ENCODE measurements at regions of chr18 and their contacts with region 1.

Region 1: GRCh38 chr18:3703732-3704176 is 253.8 kb downstream of the TGIF1 start:
- DNase-seq: peak in 4 of 5 donors; percentile 60 to 70 (median 64)
- ATAC-seq: peak; percentile 75 to 89 (median 85)
- H3K4me3 ChIP-seq: peak overlapping the region in 3 of 12 donors; percentile 7 to 37 (median 22)
- H3K27ac ChIP-seq: peak overlapping the region in 2 of 12 donors; percentile 32 to 54
- H3K4me1 ChIP-seq: peaks cover 0 to 24% (median 6%) of the 10 kb centered on the region in 12 donors
- H3K27me3 ChIP-seq: no peaks in the 10 kb centered on the region
- CTCF ChIP-seq: peak; percentile 41 to 76 (median 65)
- POLR2A ChIP-seq: no peak

Region 2: DNA sequence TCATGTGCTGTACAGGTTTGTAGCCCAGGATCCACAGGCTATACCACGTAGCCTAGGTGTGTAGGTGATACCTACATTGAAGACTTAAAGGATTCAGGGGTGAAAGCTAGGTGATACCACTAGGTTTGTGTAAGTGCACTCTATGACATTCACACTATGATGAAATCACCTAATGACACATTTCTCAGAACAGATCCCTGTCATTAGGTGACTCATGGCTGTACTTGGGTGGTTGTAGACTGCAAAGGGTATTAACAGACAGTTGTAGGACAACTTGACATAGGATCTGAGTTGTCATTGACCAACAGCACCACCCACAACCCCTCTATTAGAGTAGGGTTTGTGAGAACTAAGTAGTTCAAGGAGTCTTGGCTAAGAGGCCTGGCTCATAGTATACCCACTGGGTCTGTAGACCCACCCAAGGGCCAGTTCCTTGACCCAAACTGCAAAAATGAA is 1075.9 kb before region 1 on chr18:
- intact Hi-C with region 1: loop called in 1 of 10 experiments (anchors 10 kb)
- DNase-seq: no peak
- ATAC-seq: peak in 1 of 4 donors; percentile 48
- H3K4me3 ChIP-seq: no peak overlapping the region
- H3K27ac ChIP-seq: no peak overlapping the region
- H3K4me1 ChIP-seq: no peaks in the 10 kb centered on the region
- H3K27me3 ChIP-seq: no peaks in the 10 kb centered on the region
- CTCF ChIP-seq: no peak
- POLR2A ChIP-seq: no peak

Region 3: DNA sequence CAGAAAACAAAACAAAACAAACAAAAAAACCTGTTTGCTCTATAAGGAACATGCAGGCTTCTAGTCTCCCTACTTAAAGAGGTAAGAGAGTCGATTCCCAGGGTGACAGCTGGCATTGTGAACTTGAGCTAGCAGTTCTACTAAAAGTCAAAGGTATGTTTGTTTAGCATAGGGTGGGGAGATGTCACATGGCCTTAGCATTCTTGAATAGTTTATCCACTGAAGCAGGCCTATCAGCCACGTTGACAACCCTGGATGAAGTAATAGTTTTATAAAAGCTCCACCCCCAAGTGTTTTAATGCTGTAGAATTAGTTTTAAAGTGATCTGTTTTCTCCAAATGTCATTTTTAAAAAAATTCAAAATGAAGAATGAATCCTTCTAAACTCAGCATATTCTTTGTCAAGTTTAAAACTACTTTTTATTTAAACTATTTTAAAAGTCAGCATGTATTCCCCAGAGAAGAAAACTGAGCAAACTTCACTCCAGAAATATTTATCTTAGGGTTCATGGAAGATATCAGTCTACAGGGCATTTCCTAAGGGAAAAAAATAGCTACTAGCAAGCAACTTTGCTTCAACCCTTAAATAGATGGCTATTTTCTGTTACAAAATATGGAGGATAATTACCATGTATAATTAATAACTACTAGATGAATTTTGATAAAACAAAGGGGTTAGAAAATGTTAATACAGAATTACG is 485.7 kb before region 1 on chr18:
- intact Hi-C with region 1: no loop called
- DNase-seq: peak in 1 of 5 donors; percentile 37
- ATAC-seq: peak; percentile 41 to 55 (median 53)
- H3K4me3 ChIP-seq: peak overlapping the region; percentile 4 to 70 (median 60)
- H3K27ac ChIP-seq: peak overlapping the region; percentile 77 to 97 (median 90)
- H3K4me1 ChIP-seq: peaks cover 0 to 34% (median 9%) of the 10 kb centered on the region in 12 donors
- H3K27me3 ChIP-seq: no peaks in the 10 kb centered on the region
- CTCF ChIP-seq: no peak
- POLR2A ChIP-seq: peak; percentile 12 to 54

Region 4: DNA sequence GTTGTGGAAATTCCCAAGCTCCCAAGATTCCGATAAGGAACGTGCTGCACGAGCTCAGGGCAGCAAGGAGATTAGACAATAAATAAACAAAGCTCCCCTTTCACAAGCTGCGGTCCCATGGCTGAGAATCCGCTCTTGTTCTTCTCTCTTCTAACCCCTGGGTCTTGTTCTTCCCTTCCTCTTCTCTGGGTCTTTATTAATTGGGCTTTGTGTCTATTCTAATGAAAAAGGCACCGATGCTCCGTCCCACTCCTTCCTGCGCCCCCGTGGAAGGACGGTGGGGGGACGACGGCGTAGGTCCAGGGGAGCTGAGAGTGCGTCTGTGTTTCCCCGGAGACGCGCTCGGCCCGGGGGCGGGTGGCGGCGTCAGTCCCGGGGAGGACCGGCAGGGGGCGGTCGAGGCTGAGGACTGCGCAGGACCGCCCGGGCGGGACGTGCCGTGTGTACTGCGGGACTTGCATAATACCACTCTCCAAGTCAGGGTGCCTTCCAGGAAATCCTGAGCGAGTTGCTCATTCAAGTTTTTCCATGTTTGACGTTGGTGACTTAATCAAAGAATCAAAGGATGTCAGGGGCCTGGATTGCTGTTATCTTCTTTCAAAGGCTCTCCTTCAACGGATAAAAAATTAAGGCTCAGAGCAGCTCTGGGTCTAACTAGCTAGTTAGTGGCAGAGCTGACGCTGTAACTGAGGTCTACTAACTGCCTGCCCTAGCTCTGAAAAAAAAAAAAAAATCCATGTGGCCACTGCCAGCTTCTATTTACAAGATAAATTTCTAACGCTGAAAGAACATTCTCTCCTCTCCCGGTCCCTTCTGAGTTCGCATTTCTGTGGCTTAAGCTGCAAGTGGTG is 67.6 kb after region 1 on chr18:
- intact Hi-C with region 1: loop called in 3 of 10 experiments (anchors 1 to 10 kb)
- DNase-seq: peak; percentile 82 to 91 (median 84)
- ATAC-seq: peak; percentile 97 to 100 (median 100)
- H3K4me3 ChIP-seq: peak overlapping the region in 11 of 12 donors; percentile 1 to 53 (median 43)
- H3K27ac ChIP-seq: peak overlapping the region in 9 of 12 donors; percentile 18 to 70 (median 59)
- H3K4me1 ChIP-seq: peaks cover 0 to 9% (median 2%) of the 10 kb centered on the region in 12 donors
- H3K27me3 ChIP-seq: no peaks in the 10 kb centered on the region
- CTCF ChIP-seq: peak; percentile 93 to 99 (median 96)
- POLR2A ChIP-seq: no peak

Region 5: DNA sequence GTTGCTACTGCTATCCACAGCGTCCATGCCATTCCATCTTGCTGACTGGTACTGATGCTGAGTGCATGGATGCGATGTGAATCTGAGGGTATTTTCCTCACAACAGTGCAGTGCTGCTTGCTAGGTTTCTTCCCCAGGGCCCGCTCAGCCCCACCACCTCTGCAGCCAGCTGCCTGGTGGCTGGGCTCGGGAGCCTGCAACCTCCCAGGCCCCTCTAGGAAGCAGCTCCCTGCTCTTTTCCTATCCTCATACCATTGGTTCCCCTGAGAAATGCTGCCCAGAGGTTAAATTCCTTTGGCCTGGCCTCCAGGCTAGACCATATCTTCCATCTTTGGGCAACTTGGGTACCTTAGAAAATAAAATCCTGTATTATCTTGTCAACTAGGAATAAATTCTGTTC is 159.8 kb after region 1 on chr18:
- intact Hi-C with region 1: loop called in 2 of 10 experiments (anchors 5 to 10 kb)
- DNase-seq: no peak
- ATAC-seq: no peak
- H3K4me3 ChIP-seq: no peak overlapping the region
- H3K27ac ChIP-seq: no peak overlapping the region
- H3K4me1 ChIP-seq: peaks cover 0 to 17% (median 3%) of the 10 kb centered on the region in 12 donors
- H3K27me3 ChIP-seq: no peaks in the 10 kb centered on the region
- CTCF ChIP-seq: no peak
- POLR2A ChIP-seq: no peak

Region 6: DNA sequence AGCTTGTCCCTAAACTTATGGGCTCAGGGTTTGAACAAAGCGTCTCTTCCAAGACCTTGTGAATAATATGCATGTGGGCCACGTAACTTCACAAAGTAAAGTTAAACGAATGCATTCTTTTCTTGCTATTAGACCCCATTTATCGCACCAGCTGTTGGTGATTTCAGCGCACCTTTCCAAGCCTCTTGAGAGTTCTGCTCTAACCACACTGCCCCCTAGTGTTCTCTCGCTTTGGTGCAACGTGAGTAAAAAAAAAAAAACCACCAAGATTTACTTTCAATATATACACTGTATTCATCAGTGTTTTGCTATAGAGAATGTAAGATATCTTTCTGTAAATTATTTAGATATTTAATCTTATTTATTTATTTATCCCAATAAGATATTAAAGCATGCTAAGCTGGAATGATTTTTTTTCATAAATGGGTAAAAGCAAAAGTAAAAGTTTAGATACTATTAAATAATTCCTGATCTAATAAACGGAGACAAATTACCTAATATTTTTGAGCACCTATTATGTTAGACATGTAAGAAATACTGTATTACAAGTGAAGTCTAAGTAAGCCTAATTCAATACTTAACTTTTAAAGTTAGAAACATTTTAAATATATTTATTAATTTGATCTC is 291.8 kb after region 1 on chr18:
- intact Hi-C with region 1: loop called (anchors 2 to 10 kb)
- DNase-seq: peak in 4 of 5 donors; percentile 30 to 46 (median 38)
- ATAC-seq: peak in 3 of 4 donors; percentile 44 to 72 (median 64)
- H3K4me3 ChIP-seq: peak overlapping the region in 2 of 12 donors; percentile 8 to 11
- H3K27ac ChIP-seq: peak overlapping the region in 1 of 12 donors; percentile 84
- H3K4me1 ChIP-seq: peaks cover 0 to 18% (median 0%) of the 10 kb centered on the region in 12 donors
- H3K27me3 ChIP-seq: no peaks in the 10 kb centered on the region
- CTCF ChIP-seq: peak; percentile 80 to 93 (median 88)
- POLR2A ChIP-seq: no peak

Region 7: DNA sequence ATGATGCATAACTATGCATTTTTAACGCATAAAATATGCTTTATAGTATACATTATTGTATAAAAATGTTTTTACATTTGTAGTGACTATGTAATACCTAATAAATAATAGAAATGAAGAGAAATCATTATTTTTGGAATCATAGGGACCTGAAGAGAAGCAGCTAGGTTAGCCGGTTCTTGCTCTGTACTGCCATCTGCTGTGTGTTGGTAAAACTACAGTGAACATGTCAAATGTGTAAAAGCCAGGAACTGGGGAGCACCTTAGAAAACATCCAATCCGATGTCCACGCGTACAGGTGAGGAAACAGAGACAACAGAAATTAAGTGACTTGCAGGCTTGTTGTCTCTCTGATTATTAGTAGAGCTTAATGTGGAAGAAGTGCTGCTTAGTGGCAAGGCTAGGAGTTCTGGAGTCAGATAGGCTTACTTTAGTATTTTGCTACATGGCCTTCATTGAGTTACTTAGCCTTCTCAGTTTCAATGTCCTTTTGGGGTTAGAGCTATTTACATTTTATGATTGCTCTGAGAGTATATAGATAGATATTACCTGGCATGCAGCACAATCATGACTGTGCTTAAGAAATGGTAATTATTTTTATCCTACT is 364.9 kb after region 1 on chr18:
- intact Hi-C with region 1: loop called in 1 of 10 experiments (anchors 5 kb)
- DNase-seq: peak in 2 of 5 donors; percentile 12 to 22
- ATAC-seq: no peak
- H3K4me3 ChIP-seq: no peak overlapping the region
- H3K27ac ChIP-seq: no peak overlapping the region
- H3K4me1 ChIP-seq: no peaks in the 10 kb centered on the region
- H3K27me3 ChIP-seq: no peaks in the 10 kb centered on the region
- CTCF ChIP-seq: peak; percentile 61 to 80 (median 73)
- POLR2A ChIP-seq: no peak